ENCODE measurements at regions of chr16 and their contacts with region 1.

Region 1: GRCh38 chr16:71883849-71884638 is at the start of gene ZNF821:
- DNase-seq: peak; percentile 80 to 81
- ATAC-seq: peak; percentile 87 to 94 (median 91)
- H3K4me3 ChIP-seq: peak within 1 kb of the TSS; percentile 71 to 99 (median 95)
- H3K27ac ChIP-seq: peak within 1 kb of the TSS; percentile 87 to 94 (median 92)
- H3K4me1 ChIP-seq: peaks cover 0 to 47% (median 18%) of the 10 kb centered on the region in 9 donors
- H3K27me3 ChIP-seq: no peaks in the 10 kb centered on the region
- CTCF ChIP-seq: peak in 7 of 9 donors; percentile 20 to 71 (median 49)
- total RNA-seq, gene ZNF821: 2.2 to 7.8 (median 3.5) TPM

Region 2: GRCh38 chr16:71746442-71747046 is 137.5 kb before region 1 on chr16:
- intact Hi-C with region 1: no loop called
- DNase-seq: no peak
- ATAC-seq: no peak
- H3K4me3 ChIP-seq: no peak overlapping the region
- H3K27ac ChIP-seq: no peak overlapping the region
- H3K4me1 ChIP-seq: peaks cover 0 to 7% (median 0%) of the 10 kb centered on the region in 9 donors
- H3K27me3 ChIP-seq: no peaks in the 10 kb centered on the region
- CTCF ChIP-seq: peak; percentile 38 to 78 (median 70)

Region 3: DNA sequence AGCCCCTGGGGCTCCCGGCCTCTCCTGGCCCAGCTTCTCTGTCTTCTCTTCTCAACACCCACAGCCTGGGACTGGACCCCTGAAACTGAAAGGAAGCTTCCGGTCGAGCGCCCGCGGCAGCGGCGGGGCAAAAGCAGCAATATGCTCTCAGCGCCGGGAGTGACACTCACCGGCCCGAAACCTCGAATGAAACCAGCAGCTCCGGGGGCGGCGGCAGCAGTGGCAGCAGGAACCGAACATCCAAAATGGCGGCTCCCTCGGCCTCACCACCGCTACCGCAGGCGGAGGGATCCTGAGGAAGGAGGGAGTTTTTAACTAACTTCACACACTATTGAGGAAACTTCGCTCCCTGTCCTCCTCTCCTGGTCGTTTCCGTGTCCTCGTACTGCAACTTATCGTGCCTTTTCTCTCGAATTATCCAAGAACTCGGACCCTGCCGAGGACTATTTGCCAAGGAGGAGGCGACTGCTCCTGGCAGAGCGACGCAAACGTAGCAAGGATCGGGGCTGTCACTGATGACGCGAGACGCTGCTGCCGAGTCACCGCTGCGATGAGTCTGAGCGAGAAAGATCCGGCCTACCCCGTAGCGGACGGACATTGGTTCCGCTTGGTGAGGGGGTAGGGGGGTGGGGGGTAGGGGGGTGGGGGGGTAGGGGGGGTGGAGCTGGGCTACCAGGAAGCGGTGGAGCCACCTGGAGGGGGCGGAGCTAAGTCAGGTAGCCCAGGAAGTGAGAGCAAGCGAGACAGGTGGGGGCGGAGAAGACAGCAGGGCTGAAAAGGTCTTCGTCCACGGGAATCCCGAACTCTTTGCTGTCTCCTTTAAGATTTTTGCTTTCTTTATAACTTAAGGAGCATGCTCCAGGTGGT is 75.2 kb before region 1 on chr16 and contains the start of gene AP1G1:
- intact Hi-C with region 1: loop called in 3 of 10 experiments (anchors 2 to 10 kb)
- DNase-seq: peak; percentile 92 to 96
- ATAC-seq: peak; percentile 98 to 99 (median 99)
- H3K4me3 ChIP-seq: peak within 1 kb of the TSS; percentile 70 to 100 (median 97)
- H3K27ac ChIP-seq: peak within 1 kb of the TSS; percentile 92 to 99 (median 98)
- H3K4me1 ChIP-seq: peaks cover 0 to 41% (median 33%) of the 10 kb centered on the region in 9 donors
- H3K27me3 ChIP-seq: no peaks in the 10 kb centered on the region
- CTCF ChIP-seq: no peak
- total RNA-seq, gene AP1G1: 31.2 to 53.7 (median 36.9) TPM

Region 4: GRCh38 chr16:71845639-71846430 is 38.2 kb before region 1 on chr16 and contains the start of gene ATXN1L:
- intact Hi-C with region 1: loop called in 1 of 10 experiments (anchors 5 kb)
- DNase-seq: peak; percentile 89 to 92
- ATAC-seq: peak; percentile 97 to 98 (median 98)
- H3K4me3 ChIP-seq: peak within 1 kb of the TSS; percentile 83 to 100 (median 99)
- H3K27ac ChIP-seq: peak within 1 kb of the TSS; percentile 64 to 97 (median 91)
- H3K4me1 ChIP-seq: peaks cover 0 to 33% (median 22%) of the 10 kb centered on the region in 9 donors
- H3K27me3 ChIP-seq: no peaks in the 10 kb centered on the region
- CTCF ChIP-seq: peak in 2 of 9 donors; percentile 6 to 26
- total RNA-seq, gene ATXN1L: 13.9 to 24.2 (median 19.1) TPM

Region 5: GRCh38 chr16:71961066-71962039 is 77.3 kb after region 1 on chr16:
- intact Hi-C with region 1: loop called (anchors 1 to 10 kb)
- DNase-seq: peak; percentile 81 to 88
- ATAC-seq: peak; percentile 81 to 99 (median 94)
- H3K4me3 ChIP-seq: no peak overlapping the region
- H3K27ac ChIP-seq: no peak overlapping the region
- H3K4me1 ChIP-seq: peaks cover 0 to 14% (median 0%) of the 10 kb centered on the region in 9 donors
- H3K27me3 ChIP-seq: no peaks in the 10 kb centered on the region
- CTCF ChIP-seq: peak; percentile 66 to 90 (median 83)

Region 6: DNA sequence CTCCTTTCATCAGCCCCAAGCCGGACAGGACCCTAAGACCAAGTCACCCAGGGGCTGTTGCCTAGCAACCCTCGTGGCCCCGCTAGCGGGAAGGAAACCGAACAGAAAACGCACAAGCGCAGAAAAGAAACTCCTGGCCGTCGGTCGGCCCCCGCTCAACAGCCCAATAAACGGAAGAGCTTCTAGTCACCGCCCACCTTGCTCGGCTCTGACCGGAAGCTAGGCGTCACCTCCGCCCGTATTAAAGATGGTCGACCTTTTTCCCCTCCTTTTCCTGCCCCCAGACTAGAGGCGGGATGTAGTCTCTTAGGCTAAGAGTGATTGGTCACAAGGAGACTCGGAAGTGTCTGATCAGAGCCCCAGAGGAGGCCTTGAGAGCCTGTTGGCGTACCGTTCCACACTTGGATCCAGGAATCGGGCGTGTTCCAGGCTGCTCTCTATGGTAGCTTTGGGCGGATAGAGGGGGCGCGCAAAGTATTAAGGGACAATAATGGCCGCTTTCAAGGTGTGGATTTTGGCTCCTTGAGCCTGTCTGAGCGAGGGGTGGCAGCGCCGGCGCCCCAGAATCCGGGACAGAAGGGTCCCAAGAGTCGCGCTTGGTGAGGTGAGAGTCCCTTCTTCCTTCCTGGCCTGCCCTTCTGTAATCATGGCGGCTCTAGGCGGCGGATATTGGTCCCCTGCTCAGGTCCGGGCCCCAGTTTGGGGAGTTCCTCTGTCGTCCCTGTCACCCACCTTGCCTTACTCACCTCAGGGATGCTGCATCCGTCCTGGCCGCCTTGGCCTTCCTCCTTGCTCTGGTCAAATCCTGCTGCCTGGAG is 209.6 kb after region 1 on chr16 and contains the starts of genes DHX38 and TXNL4B:
- intact Hi-C with region 1: loop called in 1 of 10 experiments (anchors 10 kb)
- DNase-seq: peak; percentile 87 to 97
- ATAC-seq: peak; percentile 99 to 100 (median 99)
- H3K4me3 ChIP-seq: peak within 1 kb of the TSS; percentile 82 to 99 (median 90)
- H3K27ac ChIP-seq: peak within 1 kb of the TSS; percentile 74 to 95 (median 92)
- H3K4me1 ChIP-seq: peaks cover 0 to 46% (median 33%) of the 10 kb centered on the region in 9 donors
- H3K27me3 ChIP-seq: no peaks in the 10 kb centered on the region
- CTCF ChIP-seq: no peak
- total RNA-seq, gene DHX38: 29.1 to 46.5 (median 36.6) TPM
- total RNA-seq, gene TXNL4B: 3.2 to 11.7 (median 5.9) TPM